ENCODE measurements at regions of chr16 and their contacts with region 1.

Region 1: GRCh38 chr16:63361032-63361624 is 1324.9 kb upstream of the CDH8 start:
- DNase-seq: peak; percentile 66
- ATAC-seq: peak; percentile 77
- H3K4me3 ChIP-seq: no peak overlapping the region
- H3K27ac ChIP-seq: no peak overlapping the region
- H3K4me1 ChIP-seq: no peaks in the 10 kb centered on the region
- H3K27me3 ChIP-seq: no peaks in the 10 kb centered on the region
- CTCF ChIP-seq: peak; percentile 78
- POLR2A ChIP-seq: no peak
- RAD21 ChIP-seq: peak; percentile 74

Region 2: DNA sequence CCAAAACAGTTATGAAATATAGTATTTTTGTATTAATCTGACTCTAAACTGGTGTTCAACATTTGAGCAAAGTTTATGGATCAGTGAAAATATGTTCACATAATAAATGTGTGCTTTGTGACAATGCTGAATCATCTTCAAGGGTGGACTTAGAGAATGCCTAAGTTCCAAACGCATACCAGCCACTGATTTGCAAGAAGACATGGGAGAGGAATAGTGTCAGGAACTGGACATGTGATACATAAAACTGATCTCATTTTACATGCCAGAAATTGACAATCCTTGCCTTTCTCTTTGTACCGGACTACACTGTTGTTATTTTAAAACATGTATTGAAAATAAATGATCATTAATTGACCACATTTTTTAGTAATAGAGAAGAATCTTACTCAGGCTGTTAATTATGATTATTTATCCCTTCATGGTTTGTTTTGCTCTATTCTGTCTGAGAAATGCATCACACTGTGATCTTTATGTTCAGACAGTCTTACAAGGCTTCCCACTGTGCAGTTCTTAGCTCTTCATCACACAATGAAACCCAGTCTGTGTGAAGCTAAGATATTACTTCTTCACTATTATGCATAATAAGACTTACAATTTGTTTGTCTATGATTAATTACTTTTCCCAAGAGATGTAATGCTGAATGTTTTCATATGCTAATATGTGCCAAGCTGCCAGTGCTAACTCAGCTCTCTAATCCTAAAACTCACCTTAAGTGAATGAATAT is 144.3 kb before region 1 on chr16:
- CTCF ChIA-PET with region 1: no interaction called
- POLR2A ChIA-PET with region 1: no interaction called
- dilution Hi-C with region 1: no loop called
- in situ Hi-C with region 1: no loop called
- intact Hi-C with region 1: no loop called
- DNase-seq: no peak
- ATAC-seq: no peak
- H3K4me3 ChIP-seq: no peak overlapping the region
- H3K27ac ChIP-seq: no peak overlapping the region
- H3K4me1 ChIP-seq: no peaks in the 10 kb centered on the region
- H3K27me3 ChIP-seq: no peaks in the 10 kb centered on the region
- CTCF ChIP-seq: no peak
- POLR2A ChIP-seq: no peak
- RAD21 ChIP-seq: no peak

Region 3: GRCh38 chr16:64051824-64052223 is 690.7 kb after region 1 on chr16:
- CTCF ChIA-PET with region 1: no interaction called
- POLR2A ChIA-PET with region 1: no interaction called
- dilution Hi-C with region 1: no loop called
- in situ Hi-C with region 1: no loop called
- intact Hi-C with region 1: loop called (anchors 10 kb)
- DNase-seq: no peak
- ATAC-seq: no peak
- H3K4me3 ChIP-seq: no peak overlapping the region
- H3K27ac ChIP-seq: no peak overlapping the region
- H3K4me1 ChIP-seq: no peaks in the 10 kb centered on the region
- H3K27me3 ChIP-seq: no peaks in the 10 kb centered on the region
- CTCF ChIP-seq: 0 out of 2 replicates have a peak, but pooled peaks have one; percentile 33
- POLR2A ChIP-seq: no peak
- RAD21 ChIP-seq: peak; percentile 45

Region 4: DNA sequence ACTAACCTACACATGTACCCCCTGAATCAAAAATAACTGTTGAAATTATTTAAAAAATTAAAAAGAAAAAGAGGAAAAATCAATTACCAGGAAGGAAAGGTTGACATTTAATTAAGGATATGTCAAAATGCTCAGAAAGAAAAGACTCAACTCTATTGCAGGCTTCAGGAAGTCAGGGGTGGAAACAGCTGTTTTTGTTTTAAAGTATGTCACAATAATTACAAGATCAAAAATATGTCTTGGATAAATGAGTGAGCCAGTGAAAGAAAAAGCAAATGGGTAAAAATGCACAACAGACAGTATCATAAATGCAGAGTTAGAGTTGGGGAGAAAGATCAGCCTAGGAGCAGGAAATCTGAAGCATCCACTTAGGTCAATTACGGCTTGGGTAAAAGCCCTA is 1614.7 kb after region 1 on chr16:
- CTCF ChIA-PET with region 1: no interaction called
- POLR2A ChIA-PET with region 1: no interaction called
- dilution Hi-C with region 1: no loop called
- in situ Hi-C with region 1: no loop called
- intact Hi-C with region 1: loop called (anchors 10 kb)
- DNase-seq: no peak
- ATAC-seq: no peak
- H3K4me3 ChIP-seq: no peak overlapping the region
- H3K27ac ChIP-seq: no peak overlapping the region; the same call in 1 of the 2 replicates
- H3K4me1 ChIP-seq: 0 out of 2 replicates have a peak, but pooled peaks cover 1% of the 10 kb centered on the region
- H3K27me3 ChIP-seq: no peaks in the 10 kb centered on the region
- CTCF ChIP-seq: no peak
- POLR2A ChIP-seq: no peak
- RAD21 ChIP-seq: no peak

Measured in IMR-90 (cell line).